Spleen (tissue), 13 donors: ENCODE measurements at regions of chr15 and their contacts with region 1.

Region 1: DNA sequence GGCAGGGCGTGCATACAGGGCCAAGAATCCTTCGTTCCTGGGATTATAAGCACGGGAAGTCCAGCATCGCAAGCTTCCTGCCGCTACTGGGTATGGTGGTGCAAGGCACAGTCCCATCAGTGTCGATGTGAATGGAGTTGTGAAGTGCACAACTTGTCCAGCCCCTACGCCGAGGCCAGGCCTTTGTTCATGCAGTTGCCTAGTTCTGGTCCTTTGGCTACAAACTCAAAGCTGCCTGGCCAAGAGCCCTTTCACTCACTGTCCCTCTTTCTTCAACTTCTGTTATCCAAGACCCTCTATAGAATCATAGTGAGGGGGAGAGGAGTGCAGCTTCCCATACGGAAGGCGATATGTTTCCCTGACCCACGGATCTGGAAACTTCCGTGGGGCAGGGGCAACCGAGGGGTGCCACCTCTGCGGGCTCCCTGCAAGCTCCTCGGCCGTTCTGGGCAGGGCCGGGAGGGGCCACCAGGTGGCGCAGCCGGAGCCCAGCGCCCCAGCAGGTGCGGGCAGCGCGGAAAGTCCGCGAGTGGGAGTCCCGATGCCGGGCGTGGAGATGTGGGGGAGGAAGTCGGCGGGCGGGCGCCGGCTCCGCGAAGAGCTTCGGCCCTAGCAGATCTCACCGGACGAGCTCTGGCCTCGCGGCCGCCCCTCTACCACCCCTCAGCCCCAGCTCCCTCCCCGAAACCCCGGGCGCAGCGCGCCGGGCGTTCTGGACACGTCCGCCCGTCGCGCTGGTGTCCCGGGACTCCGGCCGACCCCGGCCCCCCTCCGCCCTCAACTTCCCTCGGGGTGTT is 693 bp downstream of the RASGRP1 start:
- DNase-seq: peak; percentile 97
- H3K4me3 ChIP-seq: peak overlapping the region; percentile 56 to 77 (median 67)
- H3K27ac ChIP-seq: peak overlapping the region; percentile 74 to 95 (median 92)
- H3K4me1 ChIP-seq: peaks cover 4 to 72% (median 52%) of the 10 kb centered on the region in 6 donors
- H3K27me3 ChIP-seq: peaks cover 0 to 19% (median 7%) of the 10 kb centered on the region in 7 donors
- CTCF ChIP-seq: peak; percentile 65 to 97 (median 94)
- POLR2A ChIP-seq: no peak

Region 2: GRCh38 chr15:38688761-38689160 is 124.8 kb after region 1 on chr15:
- intact Hi-C with region 1: loop called (anchors 5 kb)
- DNase-seq: no peak
- H3K4me3 ChIP-seq: no peak overlapping the region
- H3K27ac ChIP-seq: peak overlapping the region in 1 of 8 donors; percentile 58
- H3K4me1 ChIP-seq: peaks cover under 1 to 66% (median 17%) of the 10 kb centered on the region in 6 donors
- H3K27me3 ChIP-seq: no peaks in the 10 kb centered on the region
- CTCF ChIP-seq: no peak
- POLR2A ChIP-seq: no peak